ENCODE measurements at regions of chr1 and their contacts with region 1.

Region 1: DNA sequence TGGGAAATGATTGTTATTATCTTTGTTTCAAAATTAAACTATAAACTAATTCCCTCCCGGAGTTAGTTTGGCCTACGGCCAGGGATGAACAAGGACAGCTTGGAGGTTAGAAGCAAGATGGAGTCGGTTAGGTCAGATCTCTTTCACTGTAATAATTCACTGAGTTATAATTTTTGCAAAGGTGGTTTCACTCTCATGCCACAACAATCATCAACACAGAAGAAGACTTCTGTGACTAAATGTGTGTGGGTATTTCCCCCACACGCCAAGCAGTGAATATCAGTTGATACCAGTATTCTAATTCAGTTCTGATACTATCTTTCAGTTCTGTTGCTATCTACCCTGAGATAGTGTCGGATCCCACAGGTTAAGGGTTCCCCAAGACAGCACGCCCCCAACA is 215.1 kb downstream of the S1PR1 start:
- DNase-seq: no peak
- H3K4me3 Mint-ChIP-seq: no peak overlapping the region
- H3K27ac Mint-ChIP-seq: no peak overlapping the region
- H3K4me1 Mint-ChIP-seq: peaks cover 33% of the 10 kb centered on the region
- H3K27me3 Mint-ChIP-seq: peaks cover 26% of the 10 kb centered on the region

Region 2: DNA sequence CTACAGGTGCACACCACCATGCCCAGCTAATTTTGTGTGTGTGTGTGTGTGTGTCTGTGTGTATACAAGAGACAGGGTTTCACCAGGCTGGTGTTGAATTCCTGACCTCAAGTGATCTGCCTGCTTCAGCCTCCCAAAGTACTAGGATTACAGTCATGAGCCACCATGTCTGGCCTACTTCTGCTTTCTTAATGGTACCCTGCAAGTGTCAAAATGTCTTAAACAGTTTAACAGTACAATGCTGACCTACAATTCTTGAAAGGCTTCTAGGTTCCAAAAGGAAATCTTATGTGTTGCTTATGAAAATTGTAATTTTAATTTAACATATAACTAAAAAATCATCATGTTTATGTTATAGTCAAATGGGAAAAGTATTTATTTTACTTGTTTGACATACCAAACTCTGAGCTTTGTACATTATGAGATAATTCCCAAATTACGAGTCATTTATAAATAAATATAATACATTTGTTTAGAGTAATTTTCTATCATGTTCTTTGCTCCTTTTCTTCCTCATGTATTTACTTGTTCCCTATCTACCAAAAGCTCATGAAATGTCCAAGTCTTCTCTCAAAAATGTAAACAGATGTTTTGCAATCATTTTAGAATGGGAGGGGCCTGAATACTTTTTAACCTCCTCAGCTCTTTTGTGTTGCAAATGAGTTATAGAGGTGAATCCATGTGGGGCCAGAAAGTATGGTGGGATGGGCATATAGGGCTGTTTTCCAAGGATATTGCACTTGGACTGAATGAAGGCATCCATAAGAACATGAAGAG is 740.8 kb before region 1 on chr1:
- intact Hi-C with region 1: loop called (anchors 5 kb)
- DNase-seq: no peak
- H3K4me3 Mint-ChIP-seq: no peak overlapping the region
- H3K27ac Mint-ChIP-seq: no peak overlapping the region
- H3K4me1 Mint-ChIP-seq: peaks cover 21% of the 10 kb centered on the region
- H3K27me3 Mint-ChIP-seq: peaks cover 5% of the 10 kb centered on the region

Region 3: GRCh38 chr1:100895540-100896483 is 556.1 kb before region 1 on chr1 and contains the start of gene SLC30A7:
- intact Hi-C with region 1: loop called (anchors 2 kb)
- DNase-seq: peak; percentile 92
- H3K4me3 Mint-ChIP-seq: peak within 1 kb of the TSS; percentile 95
- H3K27ac Mint-ChIP-seq: peak within 1 kb of the TSS; percentile 97
- H3K4me1 Mint-ChIP-seq: peaks cover 41% of the 10 kb centered on the region
- H3K27me3 Mint-ChIP-seq: no peaks in the 10 kb centered on the region
- total RNA-seq, gene SLC30A7: 38.6 and 39.4 TPM in 2 replicates

Region 4: GRCh38 chr1:101371259-101371658 is 80.6 kb before region 1 on chr1:
- intact Hi-C with region 1: loop called (anchors 1 kb)
- DNase-seq: peak; percentile 31
- H3K4me3 Mint-ChIP-seq: peak overlapping the region; percentile 10
- H3K27ac Mint-ChIP-seq: no peak overlapping the region
- H3K4me1 Mint-ChIP-seq: peaks cover 17% of the 10 kb centered on the region
- H3K27me3 Mint-ChIP-seq: peaks cover 44% of the 10 kb centered on the region

Region 5: GRCh38 chr1:101388904-101389546 is 62.9 kb before region 1 on chr1:
- intact Hi-C with region 1: loop called (anchors 1 kb)
- DNase-seq: peak; percentile 20
- H3K4me3 Mint-ChIP-seq: no peak overlapping the region
- H3K27ac Mint-ChIP-seq: no peak overlapping the region
- H3K4me1 Mint-ChIP-seq: peaks cover 16% of the 10 kb centered on the region
- H3K27me3 Mint-ChIP-seq: peaks cover 8% of the 10 kb centered on the region

Measured in activated T-helper 2 cell treated with anti-CD3 and anti-CD28 coated beads, Interferon-gamma antibody, Interleukin-2, Interleukin-4, amounts not matched to agents 10 μg/mL and 5 μg/mL and 100 μg/mL, durations not matched to agents 14 hours and 24 hours and 36 hours (primary cell).